ENCODE measurements at regions of chr5 and their contacts with region 1.

Region 1: GRCh38 chr5:163347671-163348070 is 89.7 kb upstream of the CCNG1 start:
- DNase-seq: peak; percentile 64 to 80 (median 66)
- ATAC-seq: peak; percentile 90
- H3K4me3 ChIP-seq: no peak overlapping the region
- H3K27ac ChIP-seq: no peak overlapping the region
- H3K4me1 ChIP-seq: no peaks in the 10 kb centered on the region; a peak in 2 of 5 replicates
- H3K27me3 ChIP-seq: no peaks in the 10 kb centered on the region
- CTCF ChIP-seq: peak; percentile 67 to 91 (median 74)
- EP300 ChIP-seq: 0 out of 2 replicates have a peak, but pooled peaks have one; percentile 8
- POLR2A ChIP-seq: no peak
- RAD21 ChIP-seq: peak; percentile 84 to 87

Region 2: DNA sequence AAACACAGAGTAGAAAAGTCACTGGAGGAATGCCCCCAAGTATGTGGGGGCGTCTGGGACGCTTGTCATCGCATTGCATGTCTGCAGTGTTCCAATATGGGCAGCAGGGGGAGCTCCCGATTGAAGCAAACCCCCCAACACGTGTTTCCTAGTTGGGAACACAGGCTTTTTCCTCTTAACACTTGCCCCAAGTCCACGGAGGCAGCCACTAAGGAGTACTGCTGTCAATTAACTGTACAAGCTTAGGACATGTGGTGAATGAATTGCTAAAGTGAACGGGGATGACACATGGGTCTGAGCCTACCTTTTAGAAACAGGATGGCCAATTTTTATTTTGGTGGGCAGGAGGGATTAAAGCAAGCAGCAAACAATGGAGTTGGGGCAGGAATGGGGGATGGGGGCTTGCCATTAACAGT is 1803.3 kb before region 1 on chr5:
- CTCF ChIA-PET with region 1: no interaction called
- POLR2A ChIA-PET with region 1: no interaction called
- in situ Hi-C with region 1: no loop called
- intact Hi-C with region 1: loop called (anchors 5 kb)
- DNase-seq: peak; percentile 41 to 72 (median 55)
- ATAC-seq: peak; percentile 69
- H3K4me3 ChIP-seq: no peak overlapping the region
- H3K27ac ChIP-seq: no peak overlapping the region
- H3K4me1 ChIP-seq: no peaks in the 10 kb centered on the region; a peak in 1 of 5 replicates
- H3K27me3 ChIP-seq: no peaks in the 10 kb centered on the region
- CTCF ChIP-seq: peak; percentile 36 to 70 (median 52)
- EP300 ChIP-seq: no peak
- POLR2A ChIP-seq: no peak
- RAD21 ChIP-seq: peak; percentile 39 to 52; a peak in 3 of 4 replicates

Measured in K562 (cell line).